Psoas muscle (tissue), 8 donors: ENCODE measurements at regions of chr1 and their contacts with region 1.

Region 1: GRCh38 chr1:184143449-184143848 is 91.9 kb downstream of the TSEN15 start:
- DNase-seq: no peak
- ATAC-seq: peak; percentile 63 to 81 (median 80)
- H3K4me3 ChIP-seq: no peak overlapping the region
- H3K27ac ChIP-seq: no peak overlapping the region
- H3K4me1 ChIP-seq: peaks cover 5% of the 10 kb centered on the region
- H3K27me3 ChIP-seq: peaks cover 0 to 3% (median 0%) of the 10 kb centered on the region in 3 donors
- CTCF ChIP-seq: peak; percentile 11

Region 2: GRCh38 chr1:184210031-184210430 is 66.6 kb after region 1 on chr1:
- intact Hi-C with region 1: no loop called
- DNase-seq: no peak
- ATAC-seq: peak; percentile 40 to 55 (median 48)
- H3K4me3 ChIP-seq: no peak overlapping the region
- H3K27ac ChIP-seq: no peak overlapping the region
- H3K4me1 ChIP-seq: no peaks in the 10 kb centered on the region
- H3K27me3 ChIP-seq: no peaks in the 10 kb centered on the region
- CTCF ChIP-seq: no peak

Region 3: DNA sequence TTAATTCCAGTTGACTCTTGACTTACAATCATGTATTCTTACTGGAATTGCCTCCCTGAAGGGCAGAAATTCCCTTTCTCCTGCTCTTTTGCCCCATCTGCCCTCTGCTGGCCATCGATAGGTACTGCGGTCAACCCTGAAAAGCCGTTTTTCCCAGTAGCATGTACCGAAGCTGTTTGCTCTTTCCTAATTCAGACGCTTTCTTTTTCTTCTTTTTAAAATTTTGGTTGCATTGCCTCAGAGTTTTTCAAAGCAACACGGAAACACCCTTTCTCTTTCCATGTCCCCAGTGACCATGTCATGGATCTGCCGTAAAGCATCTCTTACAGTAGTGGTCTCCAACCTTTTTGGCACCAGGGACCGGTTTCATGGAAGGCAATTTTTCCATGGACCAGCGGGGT is 79.2 kb after region 1 on chr1:
- intact Hi-C with region 1: loop called in 1 of 2 experiments (anchors 5 kb)
- DNase-seq: peak; percentile 43 to 67
- ATAC-seq: peak; percentile 72 to 86 (median 78)
- H3K4me3 ChIP-seq: peak overlapping the region; percentile 42
- H3K27ac ChIP-seq: no peak overlapping the region
- H3K4me1 ChIP-seq: no peaks in the 10 kb centered on the region
- H3K27me3 ChIP-seq: no peaks in the 10 kb centered on the region
- CTCF ChIP-seq: peak; percentile 98

Region 4: GRCh38 chr1:184555665-184556641 is 412.5 kb after region 1 on chr1:
- intact Hi-C with region 1: no loop called
- DNase-seq: no peak
- ATAC-seq: peak; percentile 81 to 85 (median 83)
- H3K4me3 ChIP-seq: no peak overlapping the region
- H3K27ac ChIP-seq: peak overlapping the region; percentile 93
- H3K4me1 ChIP-seq: peaks cover 37% of the 10 kb centered on the region
- H3K27me3 ChIP-seq: no peaks in the 10 kb centered on the region
- CTCF ChIP-seq: no peak